CD8-positive, alpha-beta T cell (primary cell): ENCODE measurements at regions of chr15 and their contacts with region 1.

Region 1: GRCh38 chr15:51737280-51738017 is at the start of gene LYSMD2:
- DNase-seq: peak; percentile 30 to 85 (median 71)
- ATAC-seq: peak; percentile 51
- H3K4me3 ChIP-seq: peak within 1 kb of the TSS; percentile 62 to 70
- H3K4me3 Mint-ChIP-seq: peak within 1 kb of the TSS; percentile 91
- H3K27ac ChIP-seq: peak within 1 kb of the TSS; percentile 66 to 92
- H3K27ac Mint-ChIP-seq: peak within 1 kb of the TSS; percentile 99
- H3K4me1 ChIP-seq: peaks cover 43% of the 10 kb centered on the region
- H3K4me1 Mint-ChIP-seq: peaks cover 55% of the 10 kb centered on the region
- H3K27me3 ChIP-seq: no peaks in the 10 kb centered on the region
- H3K27me3 Mint-ChIP-seq: no peaks in the 10 kb centered on the region
- CTCF ChIP-seq: no peak
- total RNA-seq, gene LYSMD2: 18.9 to 20.0 TPM

Region 2: DNA sequence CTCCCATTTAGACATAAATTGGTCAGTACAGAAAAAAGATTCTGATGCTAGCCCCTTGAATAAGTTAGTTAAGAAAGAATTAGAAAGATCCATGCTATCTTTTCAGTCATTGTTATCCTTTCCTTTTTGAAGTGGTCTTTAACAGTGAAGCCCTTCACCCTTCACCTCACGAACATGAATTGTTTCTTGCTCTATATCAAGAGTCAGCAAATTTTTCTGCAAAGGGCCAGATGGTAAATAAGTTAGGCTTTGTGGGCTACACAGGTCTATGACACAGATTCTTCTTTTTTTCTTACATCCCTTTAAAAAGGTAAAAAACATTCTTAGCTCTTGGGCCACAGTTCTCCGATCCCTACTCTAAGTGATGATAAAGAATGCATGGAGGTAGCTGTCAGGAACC is 189.8 kb before region 1 on chr15:
- CTCF ChIA-PET with region 1: no interaction called
- POLR2A ChIA-PET with region 1: no interaction called
- intact Hi-C with region 1: no loop called
- DNase-seq: no peak
- ATAC-seq: no peak
- H3K4me3 ChIP-seq: no peak overlapping the region
- H3K4me3 Mint-ChIP-seq: no peak overlapping the region
- H3K27ac ChIP-seq: no peak overlapping the region
- H3K27ac Mint-ChIP-seq: no peak overlapping the region
- H3K4me1 ChIP-seq: no peaks in the 10 kb centered on the region
- H3K4me1 Mint-ChIP-seq: no peaks in the 10 kb centered on the region
- H3K27me3 ChIP-seq: no peaks in the 10 kb centered on the region
- H3K27me3 Mint-ChIP-seq: no peaks in the 10 kb centered on the region
- CTCF ChIP-seq: no peak

Region 3: DNA sequence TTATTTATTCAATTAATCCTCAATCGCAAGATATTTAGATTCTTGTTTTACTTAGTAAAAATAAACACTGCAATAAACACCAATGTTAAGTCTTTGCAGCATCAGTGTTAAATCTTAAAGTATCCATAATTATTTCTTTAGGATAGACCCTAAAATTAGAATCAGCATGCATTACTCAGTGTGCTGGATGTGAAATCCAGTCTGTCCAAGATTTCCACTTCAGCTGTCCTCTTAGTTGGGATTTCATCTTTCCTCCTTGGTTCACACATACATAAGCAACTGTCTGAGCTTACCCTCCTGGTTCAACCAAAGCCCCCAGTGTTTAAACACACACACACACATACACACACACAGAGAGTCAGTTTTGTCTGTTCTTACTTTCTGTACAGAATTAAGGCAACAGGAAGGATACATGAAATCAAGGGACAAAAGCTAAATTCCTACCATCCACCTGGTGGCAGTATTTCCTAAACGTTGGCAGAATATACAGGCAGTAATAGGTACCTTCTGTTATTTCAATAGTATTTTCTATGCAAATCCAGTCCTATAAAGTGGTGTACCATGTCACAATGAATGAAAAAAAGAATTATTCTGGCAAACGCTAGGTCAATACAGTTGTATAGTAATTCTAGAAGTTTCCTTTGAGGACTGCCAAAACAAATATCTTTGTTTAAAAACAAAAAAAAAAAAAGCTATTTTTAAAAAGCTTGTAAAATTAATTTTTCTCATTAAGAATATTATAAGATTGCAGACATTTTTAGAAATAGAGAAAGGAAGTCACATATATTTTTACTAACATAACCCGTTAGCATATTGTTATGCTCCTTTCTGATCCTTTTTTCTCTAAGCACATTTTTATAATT is 87.6 kb before region 1 on chr15:
- CTCF ChIA-PET with region 1: interaction called, 71 read pairs
- POLR2A ChIA-PET with region 1: interaction called, 9 read pairs
- intact Hi-C with region 1: loop called (anchors 1 kb)
- DNase-seq: peak in 7 of 9 experiments; percentile 26 to 85 (median 48)
- ATAC-seq: peak; percentile 85
- H3K4me3 ChIP-seq: no peak overlapping the region
- H3K4me3 Mint-ChIP-seq: no peak overlapping the region
- H3K27ac ChIP-seq: no peak overlapping the region
- H3K27ac Mint-ChIP-seq: no peak overlapping the region
- H3K4me1 ChIP-seq: no peaks in the 10 kb centered on the region
- H3K4me1 Mint-ChIP-seq: no peaks in the 10 kb centered on the region
- H3K27me3 ChIP-seq: no peaks in the 10 kb centered on the region
- H3K27me3 Mint-ChIP-seq: peaks cover 3% of the 10 kb centered on the region
- CTCF ChIP-seq: peak; percentile 92

Region 4: DNA sequence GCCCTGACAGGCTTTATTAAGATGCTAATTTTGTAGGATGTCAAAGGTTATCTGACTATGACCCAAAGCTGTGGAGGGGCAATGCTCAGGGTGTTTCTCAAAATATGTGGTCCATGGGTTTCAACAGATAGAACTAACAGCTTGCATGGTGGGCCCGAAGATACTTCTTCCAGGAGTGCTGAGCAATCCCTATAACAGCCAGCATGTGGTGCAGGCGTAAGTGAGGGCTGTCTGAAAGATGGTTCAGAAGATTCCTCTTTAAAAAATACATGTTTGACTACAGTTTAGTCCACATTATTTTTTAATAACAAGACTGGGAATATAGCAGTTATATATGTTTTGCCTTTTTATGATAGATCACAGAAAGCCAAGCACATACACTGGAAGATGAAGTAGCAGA is 48.6 kb before region 1 on chr15:
- CTCF ChIA-PET with region 1: interaction called, 8 read pairs
- POLR2A ChIA-PET with region 1: no interaction called
- intact Hi-C with region 1: loop called (anchors 2 to 5 kb)
- DNase-seq: peak in 2 of 9 experiments; percentile 21 to 43
- ATAC-seq: no peak
- H3K4me3 ChIP-seq: no peak overlapping the region
- H3K4me3 Mint-ChIP-seq: no peak overlapping the region
- H3K27ac ChIP-seq: no peak overlapping the region
- H3K27ac Mint-ChIP-seq: no peak overlapping the region
- H3K4me1 ChIP-seq: no peaks in the 10 kb centered on the region
- H3K4me1 Mint-ChIP-seq: peaks cover 6% of the 10 kb centered on the region
- H3K27me3 ChIP-seq: no peaks in the 10 kb centered on the region
- H3K27me3 Mint-ChIP-seq: peaks cover 34% of the 10 kb centered on the region
- CTCF ChIP-seq: no peak

Region 5: DNA sequence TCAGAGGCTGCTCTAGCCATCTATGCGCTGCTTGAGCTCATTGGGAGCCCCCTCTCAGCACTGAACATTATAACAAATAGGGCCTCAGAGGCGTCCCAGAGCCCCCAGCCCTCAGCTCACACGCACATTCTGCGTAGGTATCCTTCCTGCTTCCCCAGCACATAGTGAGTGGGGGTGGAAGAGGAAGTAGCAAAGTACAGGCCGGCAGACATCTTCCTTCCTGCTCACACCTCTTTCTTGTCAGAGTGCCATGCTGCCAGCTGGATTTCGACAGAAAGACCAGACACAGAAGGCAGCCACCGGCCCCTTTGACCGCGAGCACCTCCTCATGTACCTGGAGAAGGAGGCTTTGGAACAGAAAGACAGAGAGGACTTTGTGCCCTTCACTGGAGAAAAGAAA is 30.6 kb after region 1 on chr15:
- CTCF ChIA-PET with region 1: interaction called, 4 read pairs
- POLR2A ChIA-PET with region 1: interaction called, 11 read pairs
- intact Hi-C with region 1: no loop called
- DNase-seq: peak in 5 of 9 experiments; percentile 5 to 59 (median 27)
- ATAC-seq: peak; percentile 93
- H3K4me3 ChIP-seq: no peak overlapping the region
- H3K4me3 Mint-ChIP-seq: peak overlapping the region; percentile 33
- H3K27ac ChIP-seq: peak overlapping the region in 1 of 2 experiments; percentile 21
- H3K27ac Mint-ChIP-seq: peak overlapping the region; percentile 87
- H3K4me1 ChIP-seq: peaks cover 9% of the 10 kb centered on the region
- H3K4me1 Mint-ChIP-seq: peaks cover 17% of the 10 kb centered on the region
- H3K27me3 ChIP-seq: no peaks in the 10 kb centered on the region
- H3K27me3 Mint-ChIP-seq: no peaks in the 10 kb centered on the region
- CTCF ChIP-seq: no peak

Region 6: GRCh38 chr15:51793521-51794305 is 56.3 kb after region 1 on chr15:
- CTCF ChIA-PET with region 1: no interaction called
- POLR2A ChIA-PET with region 1: no interaction called
- intact Hi-C with region 1: no loop called
- DNase-seq: no peak
- ATAC-seq: no peak
- H3K4me3 ChIP-seq: no peak overlapping the region
- H3K4me3 Mint-ChIP-seq: no peak overlapping the region
- H3K27ac ChIP-seq: no peak overlapping the region
- H3K27ac Mint-ChIP-seq: no peak overlapping the region
- H3K4me1 ChIP-seq: no peaks in the 10 kb centered on the region
- H3K4me1 Mint-ChIP-seq: no peaks in the 10 kb centered on the region
- H3K27me3 ChIP-seq: no peaks in the 10 kb centered on the region
- H3K27me3 Mint-ChIP-seq: no peaks in the 10 kb centered on the region
- CTCF ChIP-seq: no peak